ENCODE measurements at regions of chr20 and their contacts with region 1.

Region 1: DNA sequence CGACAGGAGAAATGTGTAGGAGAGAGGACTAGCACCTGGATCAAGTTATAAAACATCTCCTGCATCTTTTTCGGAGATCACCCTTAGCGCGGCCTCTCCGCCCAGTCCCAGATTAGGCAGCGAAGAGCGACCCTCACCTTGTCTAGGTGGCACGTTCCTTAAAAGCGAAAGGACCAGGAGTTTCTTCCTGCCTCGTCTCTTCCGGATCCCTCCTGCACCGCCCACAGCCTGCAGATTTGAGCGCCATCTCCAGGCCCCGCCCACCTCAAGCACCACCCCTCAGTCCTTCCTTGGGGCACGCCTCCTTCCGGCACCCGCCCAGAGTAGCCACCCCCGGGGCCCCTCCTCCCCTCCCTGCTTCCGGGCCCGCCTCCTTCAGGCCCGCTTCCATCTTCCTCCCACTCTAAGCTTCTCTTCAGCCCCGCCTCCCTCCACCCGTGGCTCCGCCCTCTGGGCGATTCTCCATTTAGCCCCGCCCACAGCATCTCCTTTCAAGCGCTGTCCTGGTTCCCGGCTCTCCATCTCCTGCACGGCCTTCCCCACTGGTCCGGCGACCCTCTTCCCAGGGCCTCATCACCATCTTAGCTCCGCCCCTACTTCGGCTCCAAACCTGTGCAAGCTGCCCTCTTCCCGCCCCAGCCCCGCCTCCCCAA is 662 bp upstream of the RALY start:
- DNase-seq: peak; percentile 100
- H3K4me3 Mint-ChIP-seq: peak overlapping the region; percentile 90
- H3K27ac Mint-ChIP-seq: peak overlapping the region; percentile 98
- H3K4me1 Mint-ChIP-seq: peaks cover 46% of the 10 kb centered on the region
- H3K27me3 Mint-ChIP-seq: no peaks in the 10 kb centered on the region

Region 2: GRCh38 chr20:33443512-33444239 is 549.4 kb before region 1 on chr20 and contains the start of gene SNTA1:
- CTCF ChIA-PET with region 1: no interaction called
- intact Hi-C with region 1: loop called (anchors 5 kb)
- DNase-seq: peak; percentile 88
- H3K4me3 Mint-ChIP-seq: peak within 1 kb of the TSS; percentile 84
- H3K27ac Mint-ChIP-seq: peak within 1 kb of the TSS; percentile 46
- H3K4me1 Mint-ChIP-seq: peaks cover 10% of the 10 kb centered on the region
- H3K27me3 Mint-ChIP-seq: no peaks in the 10 kb centered on the region
- total RNA-seq, gene SNTA1: 2.6 to 2.9 TPM

Region 3: GRCh38 chr20:33568378-33568777 is 424.7 kb before region 1 on chr20:
- CTCF ChIA-PET with region 1: no interaction called
- intact Hi-C with region 1: no loop called
- DNase-seq: no peak
- H3K4me3 Mint-ChIP-seq: no peak overlapping the region
- H3K27ac Mint-ChIP-seq: no peak overlapping the region
- H3K4me1 Mint-ChIP-seq: peaks cover 26% of the 10 kb centered on the region
- H3K27me3 Mint-ChIP-seq: no peaks in the 10 kb centered on the region

Region 4: DNA sequence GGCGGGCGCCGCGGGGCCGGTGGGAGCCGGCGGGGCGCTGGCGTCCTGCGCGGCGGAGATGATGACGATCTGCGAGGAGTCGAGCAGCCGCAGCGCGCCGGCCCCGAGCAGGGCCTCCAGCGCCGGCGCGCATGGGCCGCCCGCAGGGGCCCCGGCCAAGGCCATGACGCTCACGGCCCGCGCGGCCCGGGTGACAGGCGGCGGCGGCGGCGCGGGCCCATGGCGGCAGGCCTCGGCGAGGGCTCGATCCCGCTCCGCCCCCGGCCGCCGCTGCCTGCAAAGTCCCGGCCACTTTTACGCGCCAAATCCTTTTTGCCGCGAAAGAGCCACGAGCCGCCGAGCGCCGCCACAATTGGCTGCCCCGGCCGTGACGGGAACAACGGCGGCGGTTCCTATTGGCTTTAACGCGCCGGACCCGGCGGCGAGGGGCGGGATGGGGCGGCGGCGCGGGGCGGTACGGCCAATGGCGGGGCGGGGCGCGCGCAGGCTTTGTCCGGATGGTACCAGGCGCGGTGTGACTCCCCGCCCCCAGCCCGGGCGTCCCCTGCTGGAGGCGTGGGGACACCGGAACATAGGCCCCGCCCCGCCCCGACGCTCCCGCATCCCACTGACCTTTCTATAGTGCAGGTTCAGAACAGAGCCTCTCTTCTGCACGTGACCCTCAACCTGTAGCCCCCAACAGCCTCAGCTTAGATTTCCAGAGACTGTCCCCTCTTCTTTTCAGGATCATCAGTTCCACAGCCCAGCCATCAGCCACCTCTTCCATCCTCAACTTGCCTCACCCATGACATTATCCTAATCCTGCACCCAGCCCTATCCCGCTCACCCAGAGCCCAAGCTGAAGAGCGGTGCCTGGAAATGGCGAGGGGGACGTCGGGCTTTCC is 306.7 kb before region 1 on chr20 and contains the start of gene E2F1:
- CTCF ChIA-PET with region 1: no interaction called
- intact Hi-C with region 1: loop called (anchors 1 kb)
- DNase-seq: peak; percentile 97
- H3K4me3 Mint-ChIP-seq: peak within 1 kb of the TSS; percentile 87
- H3K27ac Mint-ChIP-seq: peak within 1 kb of the TSS; percentile 88
- H3K4me1 Mint-ChIP-seq: peaks cover 62% of the 10 kb centered on the region
- H3K27me3 Mint-ChIP-seq: no peaks in the 10 kb centered on the region
- total RNA-seq, gene E2F1: 69.3 to 70.0 TPM

Region 5: DNA sequence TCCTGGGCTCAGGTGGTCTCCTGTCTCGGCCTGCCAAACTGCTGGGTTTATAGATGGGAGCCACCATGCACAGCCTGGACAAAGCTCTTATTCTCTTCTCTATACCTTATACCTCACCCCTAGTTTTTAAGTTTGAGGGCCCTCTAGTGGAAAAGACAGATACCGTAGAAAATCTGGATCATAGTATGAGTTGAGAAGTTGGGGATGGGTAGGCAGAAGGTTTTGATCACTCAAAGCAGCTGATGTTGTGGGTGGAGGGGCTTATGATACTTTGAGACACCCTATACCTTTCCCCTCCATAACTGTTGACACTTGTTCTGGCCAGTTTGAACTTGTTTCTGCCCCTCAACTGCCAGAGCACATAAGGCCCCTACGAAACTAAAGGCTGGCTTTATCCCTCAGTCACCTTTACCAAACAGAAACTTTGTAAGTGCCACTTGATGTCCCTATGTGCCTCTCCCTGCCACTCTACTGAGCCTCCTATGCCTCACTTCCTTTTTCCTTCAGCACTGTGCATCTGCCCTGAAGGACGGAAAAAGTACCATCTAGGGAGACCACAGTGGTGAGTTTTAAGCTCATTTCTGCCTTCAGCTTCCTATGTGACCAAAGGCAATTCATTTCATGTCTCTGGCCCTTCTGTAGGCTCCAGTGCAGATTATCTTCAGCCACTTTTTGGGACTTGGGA is 29.2 kb after region 1 on chr20:
- CTCF ChIA-PET with region 1: interaction called, 6 read pairs
- intact Hi-C with region 1: loop called (anchors 1 kb)
- DNase-seq: no peak
- H3K4me3 Mint-ChIP-seq: no peak overlapping the region
- H3K27ac Mint-ChIP-seq: peak overlapping the region; percentile 57
- H3K4me1 Mint-ChIP-seq: peaks cover 70% of the 10 kb centered on the region
- H3K27me3 Mint-ChIP-seq: no peaks in the 10 kb centered on the region

Region 6: GRCh38 chr20:34302723-34303528 is 309.9 kb after region 1 on chr20 and contains the start of gene AHCY:
- CTCF ChIA-PET with region 1: no interaction called
- intact Hi-C with region 1: loop called (anchors 1 kb)
- DNase-seq: peak; percentile 95
- H3K4me3 Mint-ChIP-seq: peak within 1 kb of the TSS; percentile 84
- H3K27ac Mint-ChIP-seq: peak within 1 kb of the TSS; percentile 86
- H3K4me1 Mint-ChIP-seq: peaks cover 4% of the 10 kb centered on the region
- H3K27me3 Mint-ChIP-seq: no peaks in the 10 kb centered on the region
- total RNA-seq, gene AHCY: 258 to 261 TPM

Region 7: GRCh38 chr20:34516247-34517113 is 523.4 kb after region 1 on chr20 and contains the start of gene DYNLRB1:
- CTCF ChIA-PET with region 1: no interaction called
- intact Hi-C with region 1: loop called (anchors 1 kb)
- DNase-seq: peak; percentile 96
- H3K4me3 Mint-ChIP-seq: peak within 1 kb of the TSS; percentile 98
- H3K27ac Mint-ChIP-seq: peak within 1 kb of the TSS; percentile 96
- H3K4me1 Mint-ChIP-seq: peaks cover 29% of the 10 kb centered on the region
- H3K27me3 Mint-ChIP-seq: no peaks in the 10 kb centered on the region
- total RNA-seq, gene DYNLRB1: 81.9 to 92.9 TPM

Measured in activated naive CD4-positive, alpha-beta T cell treated with anti-CD3 and anti-CD28 coated beads for 36 hours (primary cell).